HEK293 (cell line): ENCODE measurements at regions of chr17 and their contacts with region 1.

Region 1: GRCh38 chr17:1648963-1649843 is 463 bp downstream of the RILP start:
- H3K4me3 ChIP-seq: peak overlapping the region; percentile 61
- H3K27ac ChIP-seq: peak overlapping the region; percentile 86
- H3K4me1 ChIP-seq: peaks cover 8% of the 10 kb centered on the region
- CTCF ChIP-seq: peak; percentile 23

Region 2: DNA sequence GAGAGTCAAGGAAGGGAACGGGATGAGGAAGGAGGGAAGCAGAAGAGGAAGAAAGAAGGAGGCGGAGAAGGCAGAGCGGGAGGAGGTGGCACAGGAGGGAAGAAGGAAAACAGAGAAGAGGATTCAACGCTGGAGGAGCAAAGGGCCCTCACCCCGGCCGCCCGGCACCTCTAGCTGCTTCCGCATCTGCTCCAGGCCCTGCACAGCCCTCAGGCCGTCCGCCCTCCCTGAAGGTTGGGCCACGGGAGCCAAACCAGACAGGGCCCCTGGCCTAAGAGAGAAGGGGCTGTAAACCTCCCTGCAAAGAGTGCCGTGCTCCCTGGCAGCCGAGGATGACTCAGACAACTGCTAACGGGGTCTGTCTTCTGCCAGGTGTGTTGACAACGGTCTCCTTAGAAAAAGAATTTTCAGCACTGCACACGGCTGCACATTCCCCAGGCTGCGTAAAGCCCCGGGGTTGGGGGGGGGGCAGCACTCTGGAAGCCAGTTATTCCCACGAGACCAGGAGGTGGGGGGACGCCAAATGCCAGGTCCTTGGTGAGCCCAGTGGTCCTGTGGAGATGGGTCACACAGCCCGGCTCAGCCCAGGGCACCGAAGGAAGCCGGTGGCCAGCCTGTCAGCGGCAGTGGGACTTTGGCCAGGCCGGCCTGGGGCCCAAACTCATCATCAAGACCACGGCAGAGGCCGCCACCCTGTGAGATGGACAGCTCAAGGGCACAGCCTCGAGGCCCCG is 838.0 kb before region 1 on chr17:
- CTCF ChIA-PET with region 1: no interaction called
- POLR2A ChIA-PET with region 1: no interaction called
- H3K4me3 ChIP-seq: no peak overlapping the region
- H3K27ac ChIP-seq: no peak overlapping the region
- H3K4me1 ChIP-seq: no peaks in the 10 kb centered on the region
- CTCF ChIP-seq: no peak

Region 3: GRCh38 chr17:1260086-1260769 is 389.0 kb before region 1 on chr17:
- CTCF ChIA-PET with region 1: interaction called, 10 read pairs
- POLR2A ChIA-PET with region 1: no interaction called
- H3K4me3 ChIP-seq: peak overlapping the region; percentile 50
- H3K27ac ChIP-seq: peak overlapping the region; percentile 73; the same call in 1 of the 2 replicates
- H3K4me1 ChIP-seq: peaks cover 2% of the 10 kb centered on the region; the same call in 1 of the 2 replicates
- CTCF ChIP-seq: no peak

Region 4: DNA sequence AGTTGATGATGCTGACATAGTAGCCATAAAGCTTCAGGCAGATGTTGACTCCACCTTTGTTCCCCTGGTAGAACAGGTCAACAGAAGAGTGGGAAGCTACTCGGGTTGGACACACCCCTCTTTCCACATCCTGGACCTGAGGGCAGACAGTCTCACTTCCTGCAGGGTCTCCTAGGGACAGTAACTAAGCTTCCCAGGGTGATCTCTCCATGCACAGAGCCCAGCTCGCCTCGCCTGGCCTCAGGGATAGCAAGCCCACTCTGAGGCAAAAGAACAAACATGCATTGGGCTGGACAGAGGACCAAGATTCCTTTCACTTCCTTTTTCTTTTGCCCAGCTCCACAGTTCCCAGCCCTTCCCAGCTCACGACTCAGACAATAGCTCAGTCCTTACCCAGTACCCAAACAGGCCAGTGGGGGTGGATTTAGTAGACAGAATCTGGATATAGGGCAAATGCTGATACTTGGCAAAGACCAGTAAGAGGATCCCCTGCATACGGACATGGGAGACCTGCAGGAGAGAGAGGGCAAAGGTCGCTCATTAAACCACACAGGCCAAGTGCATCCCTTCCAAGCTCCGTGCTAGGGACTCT is 139.8 kb before region 1 on chr17:
- CTCF ChIA-PET with region 1: no interaction called
- POLR2A ChIA-PET with region 1: no interaction called
- H3K4me3 ChIP-seq: no peak overlapping the region
- H3K27ac ChIP-seq: no peak overlapping the region
- H3K4me1 ChIP-seq: no peaks in the 10 kb centered on the region
- CTCF ChIP-seq: no peak

Region 5: GRCh38 chr17:1684378-1685189 is 35.4 kb after region 1 on chr17 and contains the start of gene PRPF8:
- CTCF ChIA-PET with region 1: interaction called, 4 read pairs
- POLR2A ChIA-PET with region 1: interaction called, 15 read pairs
- H3K4me3 ChIP-seq: peak within 1 kb of the TSS; percentile 99
- H3K27ac ChIP-seq: peak within 1 kb of the TSS; percentile 94
- H3K4me1 ChIP-seq: peaks cover 10% of the 10 kb centered on the region; the same call in 1 of the 2 replicates
- CTCF ChIP-seq: no peak